Mammary epithelial cell (primary cell): ENCODE measurements at regions of chr14 and their contacts with region 1.

Region 1: GRCh38 chr14:69648477-69649451 is 37.4 kb downstream of the SUSD6 start:
- DNase-seq: no peak
- H3K4me3 ChIP-seq: no peak overlapping the region
- H3K27ac ChIP-seq: no peak overlapping the region
- H3K4me1 ChIP-seq: peaks cover 67% of the 10 kb centered on the region
- H3K27me3 ChIP-seq: no peaks in the 10 kb centered on the region
- CTCF ChIP-seq: no peak

Region 2: DNA sequence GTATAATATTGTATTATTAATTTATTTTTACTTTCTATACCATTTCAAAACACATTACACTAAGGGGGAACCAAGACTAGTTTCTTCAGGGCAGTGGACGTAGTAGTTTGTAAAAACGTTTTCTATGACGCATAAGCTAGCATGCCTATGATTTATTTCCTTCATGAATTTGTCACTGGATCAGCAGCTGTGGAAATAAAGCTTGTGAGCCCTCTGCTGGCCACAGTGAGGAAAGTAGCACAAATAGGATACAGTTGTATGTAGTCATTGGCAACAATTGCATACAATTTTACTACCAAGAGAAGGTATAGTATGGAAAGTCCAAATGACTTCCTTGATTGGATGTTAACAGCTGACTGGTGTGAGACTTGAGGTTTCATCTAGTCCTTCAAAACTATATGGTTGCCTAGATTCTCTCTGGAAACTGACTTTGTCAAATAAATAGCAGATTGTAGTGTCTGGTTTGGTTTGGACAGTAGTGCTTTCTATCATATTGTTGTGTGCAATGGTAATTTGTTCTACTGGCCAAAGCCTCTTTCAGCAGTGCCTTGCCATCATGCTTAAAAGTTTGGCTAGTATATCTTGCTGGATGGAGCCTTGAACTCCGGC is 188.6 kb before region 1 on chr14:
- CTCF ChIA-PET with region 1: no interaction called
- dilution Hi-C with region 1: no loop called
- in situ Hi-C with region 1: no loop called
- intact Hi-C with region 1: no loop called
- DNase-seq: peak; percentile 76
- H3K4me3 ChIP-seq: no peak overlapping the region
- H3K27ac ChIP-seq: no peak overlapping the region
- H3K4me1 ChIP-seq: no peaks in the 10 kb centered on the region
- H3K27me3 ChIP-seq: no peaks in the 10 kb centered on the region
- CTCF ChIP-seq: peak; percentile 78 to 86

Region 3: GRCh38 chr14:69594801-69595200 is 54.0 kb before region 1 on chr14:
- CTCF ChIA-PET with region 1: no interaction called
- dilution Hi-C with region 1: loop called (anchors 5 kb)
- in situ Hi-C with region 1: no loop called
- intact Hi-C with region 1: no loop called
- DNase-seq: no peak
- H3K4me3 ChIP-seq: no peak overlapping the region
- H3K27ac ChIP-seq: no peak overlapping the region
- H3K4me1 ChIP-seq: peaks cover 6% of the 10 kb centered on the region
- H3K27me3 ChIP-seq: no peaks in the 10 kb centered on the region
- CTCF ChIP-seq: no peak

Region 4: GRCh38 chr14:69708586-69709174 is 59.9 kb after region 1 on chr14:
- CTCF ChIA-PET with region 1: no interaction called
- dilution Hi-C with region 1: no loop called
- in situ Hi-C with region 1: no loop called
- intact Hi-C with region 1: no loop called
- DNase-seq: no peak
- H3K4me3 ChIP-seq: no peak overlapping the region
- H3K27ac ChIP-seq: no peak overlapping the region
- H3K4me1 ChIP-seq: peaks cover 26% of the 10 kb centered on the region
- H3K27me3 ChIP-seq: no peaks in the 10 kb centered on the region
- CTCF ChIP-seq: peak; percentile 16 to 31